Posterior vena cava (tissue), 2 donors: ENCODE measurements at regions of chr9 and their contacts with region 1.

Region 1: DNA sequence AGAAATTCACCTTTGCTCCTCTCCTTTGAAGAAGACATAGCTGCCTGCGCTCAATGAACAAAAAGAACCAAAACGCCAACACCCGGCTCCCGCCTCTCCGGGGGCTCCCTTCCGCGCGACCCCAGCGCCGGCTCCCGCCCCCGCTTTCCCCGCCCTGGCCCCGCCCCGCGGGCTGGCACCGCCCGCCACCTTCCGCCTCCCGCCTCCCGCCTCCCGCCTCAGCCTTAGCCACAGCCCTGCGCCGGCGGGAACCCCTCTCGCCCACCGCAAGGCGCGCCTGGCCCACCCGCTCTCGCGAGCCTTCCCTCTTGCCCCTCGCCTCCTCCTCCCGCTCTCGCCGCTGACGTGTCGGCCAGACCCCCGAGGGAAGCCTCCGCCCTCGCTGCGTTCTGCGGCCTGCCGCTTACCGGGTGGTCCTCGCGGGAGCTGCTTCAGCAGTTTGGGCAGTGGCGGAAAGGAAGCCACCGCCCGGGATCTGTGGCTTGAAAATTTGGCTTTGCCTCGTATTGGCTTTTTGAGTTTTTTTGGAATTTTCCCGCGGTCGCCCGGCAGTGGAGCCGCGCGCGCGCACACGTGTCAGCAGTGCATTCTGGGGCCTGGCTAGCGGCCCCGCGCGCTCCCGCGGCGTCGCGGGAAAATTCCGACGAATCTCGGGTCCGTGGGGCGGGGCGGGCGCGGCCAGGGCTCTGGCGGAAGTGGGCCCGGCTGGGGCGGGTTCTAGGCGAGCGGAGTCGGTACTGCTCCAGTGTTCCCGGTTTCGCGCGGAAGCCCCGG is at the start of gene FANCC:
- DNase-seq: peak; percentile 97
- total RNA-seq, gene FANCC: 4.4 to 7.3 TPM

Region 2: GRCh38 chr9:95249986-95250385 is 67.3 kb before region 1 on chr9:
- intact Hi-C with region 1: no loop called
- DNase-seq: no peak

Region 3: DNA sequence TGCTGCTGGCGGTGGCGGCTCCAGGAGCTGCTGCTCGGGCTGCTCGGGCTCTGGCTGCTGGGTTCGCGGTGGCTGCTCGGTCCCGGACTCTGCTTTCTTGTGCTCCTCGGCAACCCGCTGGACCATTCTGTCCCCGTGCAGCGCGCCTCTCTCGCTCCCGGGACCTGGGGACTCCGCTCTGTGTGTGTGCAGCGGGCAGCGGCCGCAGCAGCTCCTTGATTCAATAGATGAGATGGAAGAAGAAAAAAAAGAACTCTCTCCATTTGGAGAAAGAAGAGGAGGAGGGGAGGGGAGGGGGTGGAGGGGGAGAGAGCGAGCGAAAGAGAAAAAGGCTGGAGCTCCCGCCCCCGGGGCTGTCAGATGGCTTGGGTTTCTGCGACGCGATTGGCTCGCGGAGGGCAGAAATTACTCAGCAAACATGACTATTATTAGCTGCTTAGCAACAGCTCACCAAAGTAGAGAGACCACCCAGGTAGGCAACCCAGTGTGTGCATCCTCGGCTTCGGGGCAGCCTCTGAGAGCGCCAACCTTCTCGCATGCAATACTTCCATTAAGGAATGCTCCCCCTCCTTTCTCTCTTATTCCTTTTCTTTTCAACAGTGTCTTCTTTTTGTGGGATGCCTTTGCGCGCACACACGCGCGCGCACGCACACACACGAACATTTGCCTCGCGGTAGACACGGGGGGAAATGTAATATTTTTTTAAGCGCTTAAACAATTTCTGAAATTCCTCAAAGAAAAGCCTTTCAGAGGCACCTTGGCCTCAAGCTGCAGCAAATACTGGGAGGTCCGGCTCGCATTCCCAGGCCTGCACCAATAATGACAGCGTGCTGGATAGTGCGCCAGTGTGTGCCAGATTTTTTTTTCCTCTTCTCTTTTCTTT is 191.9 kb after region 1 on chr9:
- intact Hi-C with region 1: loop called in 1 of 2 experiments (anchors 10 kb)
- DNase-seq: peak; percentile 94